Right lobe of liver (tissue), 6 donors: ENCODE measurements at regions of chr3 and their contacts with region 1.

Region 1: GRCh38 chr3:60424942-60425341 is 826.3 kb downstream of the FHIT start:
- DNase-seq: no peak
- ATAC-seq: no peak
- H3K4me3 ChIP-seq: no peak overlapping the region
- H3K27ac ChIP-seq: no peak overlapping the region
- H3K4me1 ChIP-seq: peaks cover 0 to 33% (median 5%) of the 10 kb centered on the region in 4 donors
- H3K27me3 ChIP-seq: no peaks in the 10 kb centered on the region
- CTCF ChIP-seq: no peak
- POLR2A ChIP-seq: no peak

Region 2: DNA sequence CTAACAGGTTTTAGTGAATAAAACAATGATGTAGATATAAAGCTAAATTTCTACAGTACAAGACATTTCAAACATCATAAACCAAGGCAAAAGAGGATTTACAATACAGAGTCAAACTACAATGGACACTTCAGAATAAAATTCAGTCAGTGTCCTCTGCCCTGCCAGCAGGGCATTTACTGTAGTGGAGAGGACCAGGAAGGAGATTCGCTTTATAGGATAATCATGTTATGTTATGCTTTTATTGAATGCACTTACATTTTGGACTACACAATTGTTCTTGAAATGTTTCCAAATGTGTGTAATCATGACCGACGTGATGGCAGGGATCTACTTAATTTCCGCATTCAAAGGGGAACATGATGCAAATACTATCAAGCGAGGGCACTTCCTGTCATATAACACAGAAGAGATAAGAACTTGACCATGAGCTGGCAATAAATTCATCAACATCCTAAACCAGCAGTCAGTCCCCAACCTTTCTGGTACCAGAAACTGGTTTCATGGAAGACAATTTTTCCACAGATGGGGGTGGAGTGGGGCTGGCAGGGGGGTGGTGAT is 99.3 kb before region 1 on chr3:
- intact Hi-C with region 1: loop called in 1 of 2 experiments (anchors 10 kb)
- DNase-seq: no peak
- ATAC-seq: no peak
- H3K4me3 ChIP-seq: no peak overlapping the region
- H3K27ac ChIP-seq: no peak overlapping the region
- H3K4me1 ChIP-seq: peaks cover 0 to 10% (median 5%) of the 10 kb centered on the region in 4 donors
- H3K27me3 ChIP-seq: no peaks in the 10 kb centered on the region
- CTCF ChIP-seq: no peak
- POLR2A ChIP-seq: no peak